SK-N-SH (cell line): ENCODE measurements at regions of chr9 and their contacts with region 1.

Region 1: GRCh38 chr9:126690431-126691350 is 77.0 kb downstream of the LMX1B start:
- DNase-seq: peak; percentile 82
- H3K4me3 ChIP-seq: no peak overlapping the region; a peak in 1 of 4 replicates
- H3K27ac ChIP-seq: no peak overlapping the region
- H3K4me1 ChIP-seq: no peaks in the 10 kb centered on the region
- H3K27me3 ChIP-seq: peaks cover 44% of the 10 kb centered on the region
- CTCF ChIP-seq: peak; percentile 66
- EP300 ChIP-seq: no peak
- RAD21 ChIP-seq: peak; percentile 50

Region 2: GRCh38 chr9:126506361-126506941 is 184.2 kb before region 1 on chr9:
- CTCF ChIA-PET with region 1: interaction called, 52 read pairs
- POLR2A ChIA-PET with region 1: no interaction called
- DNase-seq: no peak
- H3K4me3 ChIP-seq: no peak overlapping the region
- H3K27ac ChIP-seq: peak overlapping the region in 1 of 2 experiments; percentile 28; a peak in 1 of 4 replicates
- H3K4me1 ChIP-seq: peaks cover 0 to 45% of the 10 kb centered on the region in 2 experiments; a peak in 1 of 4 replicates
- H3K27me3 ChIP-seq: no peaks in the 10 kb centered on the region
- CTCF ChIP-seq: no peak
- EP300 ChIP-seq: no peak
- RAD21 ChIP-seq: no peak

Region 3: DNA sequence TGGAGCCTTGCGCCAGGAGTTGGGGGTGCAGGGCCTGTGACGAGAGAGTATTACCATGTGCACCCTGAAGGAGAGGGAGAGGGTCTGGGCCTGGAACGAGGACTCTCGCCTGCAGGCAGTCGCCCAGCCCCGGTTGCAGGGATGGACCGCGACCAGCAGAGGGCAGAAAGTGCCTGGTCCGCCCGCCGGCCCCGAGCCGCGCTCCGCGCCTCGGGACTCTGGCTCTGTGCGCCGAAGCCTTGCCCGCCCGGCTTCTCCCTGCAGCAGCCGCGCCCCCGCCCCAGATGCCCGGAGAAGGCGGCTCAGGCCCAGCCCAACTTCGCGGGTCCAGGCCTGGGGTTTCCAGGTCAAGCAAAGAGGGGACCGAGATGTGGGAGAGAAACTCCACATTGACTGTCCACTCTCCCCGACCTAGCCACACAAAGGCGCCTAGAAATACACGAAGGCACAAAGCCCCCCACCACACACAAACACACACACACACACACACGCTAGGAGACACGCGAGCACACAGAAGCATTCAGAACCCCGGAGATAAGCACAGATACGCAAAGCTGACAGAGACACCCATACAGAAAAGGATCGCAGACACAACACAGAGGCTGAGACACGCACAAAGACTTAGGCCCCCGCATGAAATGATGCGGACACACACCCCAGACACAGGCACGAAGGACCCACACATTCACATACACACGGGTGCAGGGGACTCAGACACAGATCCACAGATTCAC is 78.9 kb before region 1 on chr9:
- CTCF ChIA-PET with region 1: interaction called, 65 read pairs
- POLR2A ChIA-PET with region 1: no interaction called
- DNase-seq: peak; percentile 94
- H3K4me3 ChIP-seq: peak overlapping the region in 1 of 2 experiments; percentile 36; a peak in 1 of 4 replicates
- H3K27ac ChIP-seq: no peak overlapping the region
- H3K4me1 ChIP-seq: no peaks in the 10 kb centered on the region; a peak in 1 of 4 replicates
- H3K27me3 ChIP-seq: peaks cover 88% of the 10 kb centered on the region
- CTCF ChIP-seq: peak; percentile 70
- EP300 ChIP-seq: no peak
- RAD21 ChIP-seq: peak; percentile 68

Region 4: GRCh38 chr9:126636983-126637798 is 53.5 kb before region 1 on chr9:
- CTCF ChIA-PET with region 1: interaction called, 28 read pairs
- POLR2A ChIA-PET with region 1: no interaction called
- DNase-seq: no peak
- H3K4me3 ChIP-seq: no peak overlapping the region
- H3K27ac ChIP-seq: no peak overlapping the region
- H3K4me1 ChIP-seq: no peaks in the 10 kb centered on the region; a peak in 1 of 4 replicates
- H3K27me3 ChIP-seq: peaks cover 98% of the 10 kb centered on the region
- CTCF ChIP-seq: no peak
- EP300 ChIP-seq: no peak
- RAD21 ChIP-seq: no peak

Region 5: GRCh38 chr9:126652140-126652558 is 38.5 kb before region 1 on chr9:
- CTCF ChIA-PET with region 1: interaction called, 20 read pairs
- POLR2A ChIA-PET with region 1: interaction called, 3 read pairs
- DNase-seq: no peak
- H3K4me3 ChIP-seq: no peak overlapping the region
- H3K27ac ChIP-seq: no peak overlapping the region
- H3K4me1 ChIP-seq: no peaks in the 10 kb centered on the region; a peak in 1 of 4 replicates
- H3K27me3 ChIP-seq: peaks cover 88% of the 10 kb centered on the region
- CTCF ChIP-seq: no peak
- EP300 ChIP-seq: no peak
- RAD21 ChIP-seq: no peak

Region 6: GRCh38 chr9:126704873-126705766 is 14.4 kb after region 1 on chr9:
- CTCF ChIA-PET with region 1: interaction called, 136 read pairs
- POLR2A ChIA-PET with region 1: no interaction called
- DNase-seq: peak; percentile 93
- H3K4me3 ChIP-seq: peak overlapping the region in 1 of 2 experiments; percentile 34; a peak in 1 of 4 replicates
- H3K27ac ChIP-seq: no peak overlapping the region
- H3K4me1 ChIP-seq: peaks cover 0 to 5% of the 10 kb centered on the region in 2 experiments; a peak in 1 of 4 replicates
- H3K27me3 ChIP-seq: peaks cover 34% of the 10 kb centered on the region; the same call in 1 of the 2 replicates
- CTCF ChIP-seq: peak; percentile 82
- EP300 ChIP-seq: no peak
- RAD21 ChIP-seq: peak; percentile 78

Region 7: DNA sequence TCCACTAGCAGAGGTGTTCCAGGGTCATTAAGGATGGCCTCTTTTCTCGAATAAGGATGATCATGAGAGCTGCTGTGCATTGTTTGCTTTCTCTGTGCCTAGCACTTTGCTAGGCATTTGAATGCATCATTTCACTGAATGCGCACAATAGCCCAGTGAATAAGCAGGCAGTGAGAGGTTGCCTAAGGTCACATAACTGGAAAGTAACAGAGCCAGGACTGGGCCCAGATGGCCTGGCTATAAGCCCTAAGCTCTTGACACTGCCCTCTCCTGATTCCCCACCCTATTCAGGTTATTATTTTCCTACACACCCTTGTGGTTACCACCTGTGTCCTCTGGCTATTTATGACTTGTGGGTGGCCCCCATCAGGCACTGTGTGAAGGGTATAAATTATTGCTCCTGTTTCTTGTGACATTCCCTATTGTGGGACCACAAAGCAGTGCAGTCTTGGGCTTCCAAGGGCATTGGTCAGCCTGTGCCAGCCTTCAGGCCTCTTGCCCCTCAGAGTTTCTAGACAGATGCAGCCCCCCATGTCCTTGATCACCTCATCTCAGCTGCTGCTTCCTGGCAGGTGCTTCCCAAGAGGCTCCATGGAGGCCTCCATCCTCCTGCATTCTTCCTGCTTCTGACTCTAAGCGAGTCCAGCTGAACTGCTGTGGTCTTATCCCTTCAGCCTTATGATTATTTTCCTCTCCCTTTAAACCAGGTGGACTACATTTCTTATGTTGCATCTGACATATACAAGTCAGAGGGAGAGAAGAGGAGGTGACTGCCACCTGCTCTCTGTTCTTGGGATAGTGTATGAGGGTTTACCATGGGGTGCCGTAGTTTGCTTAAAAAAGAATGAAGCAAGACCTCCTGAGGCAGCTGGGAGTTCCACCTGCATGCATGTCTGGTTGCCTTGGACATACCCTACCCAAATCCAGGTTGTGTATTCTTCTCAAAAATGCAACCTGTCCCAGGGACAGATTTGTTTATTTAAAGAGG is 384.2 kb after region 1 on chr9:
- CTCF ChIA-PET with region 1: no interaction called
- POLR2A ChIA-PET with region 1: no interaction called
- DNase-seq: no peak
- H3K4me3 ChIP-seq: no peak overlapping the region
- H3K27ac ChIP-seq: no peak overlapping the region
- H3K4me1 ChIP-seq: peaks cover 0 to 8% of the 10 kb centered on the region in 2 experiments; a peak in 1 of 4 replicates
- H3K27me3 ChIP-seq: no peaks in the 10 kb centered on the region
- CTCF ChIP-seq: no peak
- EP300 ChIP-seq: no peak
- RAD21 ChIP-seq: no peak

Region 8: DNA sequence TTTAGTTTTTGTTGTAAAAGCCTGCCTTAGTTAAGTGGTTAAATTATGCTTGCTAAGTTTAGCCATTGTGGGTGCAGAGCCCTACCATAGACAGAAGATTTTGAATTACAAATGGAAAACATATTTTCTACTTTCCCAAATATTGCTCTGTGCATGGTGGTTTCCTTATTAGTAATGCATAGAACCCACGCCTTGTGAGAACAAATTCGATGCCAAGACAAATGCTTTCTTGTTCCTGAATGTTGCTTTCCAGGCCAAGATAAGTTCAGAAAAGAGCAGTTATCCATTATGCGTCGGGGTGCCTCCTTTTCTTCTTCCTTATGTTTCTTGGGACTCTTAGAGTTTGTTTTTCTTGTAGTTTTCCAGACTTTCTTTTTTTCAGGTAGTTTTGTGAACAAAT is 542.9 kb after region 1 on chr9:
- CTCF ChIA-PET with region 1: no interaction called
- POLR2A ChIA-PET with region 1: no interaction called
- DNase-seq: no peak
- H3K4me3 ChIP-seq: no peak overlapping the region
- H3K27ac ChIP-seq: peak overlapping the region; percentile 43 to 78; a peak in 3 of 4 replicates
- H3K4me1 ChIP-seq: peaks cover 7 to 13% of the 10 kb centered on the region in 2 experiments; a peak in 2 of 4 replicates
- H3K27me3 ChIP-seq: no peaks in the 10 kb centered on the region
- CTCF ChIP-seq: no peak
- EP300 ChIP-seq: no peak
- RAD21 ChIP-seq: no peak